ENCODE measurements at regions of chr17 and their contacts with region 1.

Region 1: DNA sequence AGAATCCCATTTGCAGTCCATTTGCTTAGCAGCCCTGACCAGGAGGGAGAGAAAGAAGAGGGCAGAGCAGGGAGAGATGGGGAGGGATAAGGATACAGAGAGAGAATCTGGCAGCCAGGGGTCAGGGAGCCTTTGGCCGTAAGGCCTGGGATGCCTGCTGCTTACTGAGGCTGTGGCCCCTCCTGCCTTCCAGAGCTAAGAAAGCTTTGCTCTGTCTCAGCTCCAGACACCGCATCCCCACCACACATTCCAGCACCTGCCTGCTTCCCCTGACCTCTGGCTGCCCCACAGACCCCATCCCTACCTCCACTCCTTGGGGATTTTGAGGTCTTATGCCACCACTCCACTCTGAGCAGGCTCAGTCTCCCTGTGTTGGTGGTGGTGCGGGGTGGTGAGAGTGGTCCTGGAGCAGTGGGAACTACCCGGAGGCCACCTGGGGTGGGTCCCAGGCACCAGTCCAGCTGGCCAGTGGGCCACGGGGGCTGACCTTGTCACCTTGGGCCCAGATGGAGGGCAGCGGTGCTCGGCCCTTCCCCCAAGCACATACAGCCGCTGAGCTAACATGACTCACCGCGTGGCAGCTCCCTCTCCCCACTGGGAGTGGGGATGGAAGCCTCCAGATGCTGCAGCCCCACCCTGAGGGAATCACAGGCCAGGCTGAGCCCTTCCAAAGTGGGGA is 58.3 kb downstream of the RAI1 start:
- DNase-seq: no peak
- ATAC-seq: no peak
- H3K4me3 Mint-ChIP-seq: no peak overlapping the region
- H3K27ac Mint-ChIP-seq: no peak overlapping the region
- H3K4me1 Mint-ChIP-seq: peaks cover 39% of the 10 kb centered on the region
- H3K27me3 Mint-ChIP-seq: peaks cover 20% of the 10 kb centered on the region
- CTCF ChIP-seq: no peak

Region 2: DNA sequence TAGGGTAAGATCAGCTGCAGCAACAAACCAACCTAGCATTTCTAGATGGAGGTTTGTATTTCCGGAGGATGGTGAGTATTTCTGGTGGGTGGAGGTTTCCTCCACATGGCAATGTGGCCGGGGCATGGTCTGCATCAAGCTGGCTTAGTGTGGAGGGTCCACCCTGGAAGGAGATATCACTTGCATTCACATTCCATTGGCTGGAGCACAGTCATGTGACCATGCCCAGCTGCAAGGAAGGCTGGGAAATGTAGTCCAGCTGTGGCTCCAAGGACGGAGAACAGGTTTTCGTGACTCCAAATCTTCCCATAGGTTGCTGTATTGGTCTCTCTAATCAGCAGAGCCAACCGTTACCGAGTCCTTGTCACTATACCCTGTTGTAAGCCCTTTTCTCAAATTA is 10.4 kb after region 1 on chr17:
- CTCF ChIA-PET with region 1: interaction called, 19 read pairs
- POLR2A ChIA-PET with region 1: interaction called, 4 read pairs
- DNase-seq: peak; percentile 86
- ATAC-seq: peak; percentile 56
- H3K4me3 Mint-ChIP-seq: peak overlapping the region; percentile 14; the same call in 1 of the 2 replicates
- H3K27ac Mint-ChIP-seq: peak overlapping the region; percentile 91
- H3K4me1 Mint-ChIP-seq: peaks cover 54% of the 10 kb centered on the region
- H3K27me3 Mint-ChIP-seq: no peaks in the 10 kb centered on the region
- CTCF ChIP-seq: no peak

Region 3: DNA sequence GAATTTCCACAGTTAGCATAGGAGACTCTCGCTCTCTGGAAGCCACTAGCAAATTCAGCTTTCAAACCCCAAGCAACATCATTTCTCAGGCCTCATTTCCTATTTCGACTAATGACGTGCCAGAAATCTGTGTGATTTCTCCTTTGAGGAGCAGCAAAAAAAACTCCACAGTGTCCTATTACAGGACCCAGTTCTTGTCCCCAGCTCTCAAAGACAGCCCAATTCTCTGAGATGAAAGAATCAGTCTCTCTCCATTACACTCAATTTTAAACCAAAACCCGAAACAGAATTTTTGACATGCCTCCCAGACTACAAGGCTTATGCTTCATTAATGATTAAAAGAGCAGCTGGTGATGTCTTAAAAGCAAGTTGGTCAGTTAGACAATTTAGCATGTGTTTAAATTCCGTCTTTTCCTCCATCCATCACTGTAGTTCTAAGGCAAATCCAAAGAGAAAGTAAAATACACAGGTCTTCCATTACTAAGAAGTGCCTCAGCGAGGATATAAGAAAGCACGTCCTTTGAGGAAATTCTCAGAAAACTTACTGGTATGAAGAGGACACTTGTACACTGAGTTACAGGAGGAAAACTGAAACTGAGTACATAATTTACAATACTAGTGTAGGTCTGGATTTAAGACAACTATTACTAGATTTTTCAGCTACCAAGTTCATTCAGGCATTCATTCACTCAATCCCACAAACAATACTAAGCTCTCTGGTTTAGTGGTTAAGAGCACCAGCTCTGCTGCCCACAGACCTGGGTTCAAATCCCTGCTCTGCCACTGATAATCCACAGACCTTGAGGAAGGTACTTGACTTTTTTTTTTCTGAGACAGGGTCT is 220.2 kb after region 1 on chr17:
- CTCF ChIA-PET with region 1: no interaction called
- POLR2A ChIA-PET with region 1: no interaction called
- DNase-seq: no peak
- ATAC-seq: no peak
- H3K4me3 Mint-ChIP-seq: no peak overlapping the region
- H3K27ac Mint-ChIP-seq: no peak overlapping the region
- H3K4me1 Mint-ChIP-seq: peaks cover 13% of the 10 kb centered on the region
- H3K27me3 Mint-ChIP-seq: no peaks in the 10 kb centered on the region; the same call in 1 of the 2 replicates
- CTCF ChIP-seq: no peak